ENCODE measurements at regions of chr10 and their contacts with region 1.

Region 1: GRCh38 chr10:43204943-43205671 is 61.8 kb downstream of the RASGEF1A start:
- DNase-seq: peak; percentile 72
- ATAC-seq: peak; percentile 73
- H3K4me3 ChIP-seq: no peak overlapping the region
- H3K27ac ChIP-seq: no peak overlapping the region
- H3K4me1 ChIP-seq: peaks cover 9% of the 10 kb centered on the region
- H3K27me3 ChIP-seq: no peaks in the 10 kb centered on the region
- CTCF ChIP-seq: peak; percentile 99

Region 2: DNA sequence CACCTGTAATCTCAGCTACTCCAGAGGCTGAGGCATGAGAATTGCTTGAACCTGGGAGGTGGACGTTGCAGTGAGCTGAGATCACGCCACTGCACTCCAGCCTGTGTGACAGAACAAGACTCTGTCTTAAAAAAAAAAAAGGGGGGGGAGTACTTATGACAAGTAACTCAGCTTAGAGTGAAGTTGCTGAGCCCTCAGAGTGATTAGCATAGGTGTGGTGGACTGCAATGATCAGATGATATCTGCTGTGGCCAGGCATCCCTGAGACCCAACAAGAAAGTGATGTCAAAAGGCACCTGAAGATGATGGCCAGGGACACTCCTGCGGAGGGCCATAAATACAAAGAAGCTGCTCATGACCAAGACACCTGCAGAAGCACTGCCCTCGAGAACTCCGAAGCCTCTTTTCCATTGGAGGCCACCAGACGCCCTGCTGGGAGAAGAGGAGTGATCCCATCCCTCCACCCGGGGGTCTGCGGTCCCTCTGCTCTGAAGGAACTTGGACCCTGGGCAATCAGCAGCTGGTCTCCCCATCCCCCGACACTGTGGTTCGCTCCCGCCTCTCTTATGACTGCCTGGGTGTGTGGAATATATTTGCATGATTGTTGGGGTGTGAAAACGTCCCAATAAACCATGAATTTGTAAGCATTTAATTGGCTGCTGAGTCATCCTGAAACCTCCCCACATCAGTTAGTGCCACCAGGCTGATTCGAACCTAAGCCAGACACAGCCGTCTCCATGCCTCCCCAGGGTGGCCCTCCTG is 15.7 kb after region 1 on chr10:
- CTCF ChIA-PET with region 1: interaction called, 14 read pairs
- POLR2A ChIA-PET with region 1: no interaction called
- in situ Hi-C with region 1: no loop called
- intact Hi-C with region 1: no loop called
- DNase-seq: no peak
- ATAC-seq: no peak
- H3K4me3 ChIP-seq: no peak overlapping the region
- H3K27ac ChIP-seq: no peak overlapping the region
- H3K4me1 ChIP-seq: peaks cover 3% of the 10 kb centered on the region; the same call in 1 of the 2 replicates
- H3K27me3 ChIP-seq: no peaks in the 10 kb centered on the region
- CTCF ChIP-seq: no peak

Region 3: GRCh38 chr10:43375389-43376017 is 170.4 kb after region 1 on chr10:
- CTCF ChIA-PET with region 1: interaction called, 15 read pairs
- POLR2A ChIA-PET with region 1: interaction called, 5 read pairs
- in situ Hi-C with region 1: no loop called
- intact Hi-C with region 1: no loop called
- DNase-seq: no peak
- ATAC-seq: no peak
- H3K4me3 ChIP-seq: no peak overlapping the region
- H3K27ac ChIP-seq: no peak overlapping the region
- H3K4me1 ChIP-seq: no peaks in the 10 kb centered on the region; the same call in 1 of the 2 replicates
- H3K27me3 ChIP-seq: no peaks in the 10 kb centered on the region
- CTCF ChIP-seq: no peak

Region 4: GRCh38 chr10:43854007-43854406 is 648.9 kb after region 1 on chr10:
- CTCF ChIA-PET with region 1: no interaction called
- POLR2A ChIA-PET with region 1: no interaction called
- in situ Hi-C with region 1: no loop called
- intact Hi-C with region 1: no loop called
- DNase-seq: no peak
- ATAC-seq: no peak
- H3K4me3 ChIP-seq: no peak overlapping the region
- H3K27ac ChIP-seq: no peak overlapping the region
- H3K4me1 ChIP-seq: no peaks in the 10 kb centered on the region
- H3K27me3 ChIP-seq: peaks cover 6% of the 10 kb centered on the region; the same call in 1 of the 2 replicates
- CTCF ChIP-seq: no peak

Measured in Panc1 (cell line).